WTC11 (cell line): ENCODE measurements at regions of chr1 and their contacts with region 1.

Region 1: GRCh38 chr1:222171005-222171404 is 376.9 kb downstream of the HHIPL2 start:
- DNase-seq: no peak
- ATAC-seq: peak; percentile 97
- H3K4me3 Mint-ChIP-seq: no peak overlapping the region
- H3K27ac Mint-ChIP-seq: no peak overlapping the region
- H3K4me1 Mint-ChIP-seq: no peaks in the 10 kb centered on the region
- H3K27me3 Mint-ChIP-seq: no peaks in the 10 kb centered on the region
- CTCF ChIP-seq: peak; percentile 37; the same call in 1 of the 2 replicates

Region 2: GRCh38 chr1:221478050-221478949 is 692.7 kb before region 1 on chr1:
- CTCF ChIA-PET with region 1: interaction called, 10 read pairs
- POLR2A ChIA-PET with region 1: no interaction called
- DNase-seq: peak; percentile 65
- ATAC-seq: peak; percentile 100
- H3K4me3 Mint-ChIP-seq: no peak overlapping the region
- H3K27ac Mint-ChIP-seq: no peak overlapping the region
- H3K4me1 Mint-ChIP-seq: 0 out of 2 replicates have a peak, but pooled peaks cover 3% of the 10 kb centered on the region
- H3K27me3 Mint-ChIP-seq: no peaks in the 10 kb centered on the region
- CTCF ChIP-seq: no peak

Region 3: DNA sequence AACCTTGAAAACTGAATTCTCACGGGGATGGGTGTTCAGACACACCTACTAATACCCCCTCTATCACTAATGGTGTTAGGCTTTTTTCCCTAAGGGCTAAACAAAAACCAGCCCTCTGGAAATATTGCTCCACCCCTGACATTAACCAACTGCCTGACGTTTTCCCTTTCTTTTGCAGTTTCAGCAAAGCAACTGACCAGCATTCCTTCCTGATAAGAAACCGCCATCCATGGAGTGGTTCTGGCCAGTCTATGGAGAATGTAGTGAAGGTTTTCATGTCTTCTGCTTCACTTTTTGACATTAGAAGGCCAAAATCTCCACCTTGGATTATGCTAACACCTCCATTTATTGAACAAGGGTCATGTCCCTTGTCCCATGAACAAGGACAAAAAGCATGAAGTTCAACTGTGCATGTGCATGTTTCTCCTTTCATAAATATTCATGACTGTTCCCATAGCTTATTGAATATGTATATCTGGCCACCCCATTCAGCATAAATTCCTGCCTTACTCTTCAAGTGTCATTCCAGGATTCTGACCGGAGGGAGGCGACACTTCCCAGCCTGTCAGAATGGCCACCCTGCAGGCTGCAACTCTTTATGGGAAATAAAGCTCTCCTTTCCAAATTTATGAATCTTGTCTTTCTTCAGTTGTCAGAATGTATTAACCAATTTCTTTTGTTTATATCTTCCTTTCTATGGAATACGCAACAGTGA is 62.6 kb after region 1 on chr1:
- CTCF ChIA-PET with region 1: no interaction called
- POLR2A ChIA-PET with region 1: no interaction called
- DNase-seq: peak; percentile 18
- ATAC-seq: no peak
- H3K4me3 Mint-ChIP-seq: no peak overlapping the region
- H3K27ac Mint-ChIP-seq: no peak overlapping the region
- H3K4me1 Mint-ChIP-seq: peaks cover 11% of the 10 kb centered on the region; the same call in 1 of the 2 replicates
- H3K27me3 Mint-ChIP-seq: no peaks in the 10 kb centered on the region; the same call in 1 of the 2 replicates
- CTCF ChIP-seq: 0 out of 2 replicates have a peak, but pooled peaks have one; percentile 16